ENCODE measurements at regions of chr4 and their contacts with region 1.

Region 1: DNA sequence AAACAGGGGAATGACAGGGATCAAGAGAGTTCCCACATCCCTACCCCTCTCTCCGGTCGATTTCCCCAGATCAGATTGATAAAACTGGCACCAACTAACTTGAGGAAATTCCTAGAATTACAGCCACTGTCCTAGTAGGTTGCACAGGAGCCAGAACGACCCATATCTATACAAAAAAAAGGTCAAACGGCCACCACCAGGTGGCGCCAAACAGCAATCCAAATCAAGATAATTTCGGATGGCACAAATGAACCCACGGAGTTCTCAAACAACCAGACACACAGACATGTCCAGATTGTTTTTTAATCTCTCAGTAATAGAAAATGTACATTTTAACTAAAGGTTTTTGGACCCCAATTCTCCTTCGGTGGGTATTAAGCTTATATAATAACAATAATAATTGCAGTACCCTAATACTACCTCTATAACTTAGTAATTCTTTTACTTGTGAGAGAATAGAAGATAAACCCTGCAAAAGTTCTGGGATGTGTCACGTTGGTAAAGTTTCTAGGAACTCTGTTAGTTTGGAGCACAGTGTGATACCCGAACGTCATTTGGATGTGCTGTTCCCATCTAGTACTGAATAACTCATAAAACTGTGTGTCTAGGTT is 212.6 kb downstream of the SPOCK3 start:
- DNase-seq: peak; percentile 66
- H3K4me3 ChIP-seq: no peak overlapping the region
- H3K27ac ChIP-seq: no peak overlapping the region
- H3K4me1 ChIP-seq: no peaks in the 10 kb centered on the region
- H3K27me3 ChIP-seq: no peaks in the 10 kb centered on the region
- CTCF ChIP-seq: peak in 3 of 4 experiments; percentile 57 to 75 (median 58)
- EP300 ChIP-seq: no peak
- POLR2A ChIP-seq: no peak

Region 2: DNA sequence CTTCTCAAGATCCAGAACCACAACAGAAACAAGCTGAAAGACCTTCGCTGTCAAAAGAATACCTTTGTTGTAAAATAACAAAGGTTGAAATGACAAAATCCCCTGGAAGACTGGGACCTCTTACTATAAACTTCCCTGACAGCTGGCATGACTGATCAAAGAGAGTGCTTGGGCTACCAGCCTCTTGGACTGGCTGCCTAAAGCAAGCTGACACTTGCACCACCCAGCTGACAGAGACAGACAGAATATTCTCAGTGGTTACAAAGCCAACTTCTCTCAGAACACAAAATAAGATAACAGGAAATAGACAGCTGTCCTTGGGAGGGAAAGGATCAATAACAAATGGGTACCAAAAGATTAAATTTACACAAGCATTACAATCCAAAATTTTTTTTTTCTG is 454.3 kb after region 1 on chr4:
- intact Hi-C with region 1: no loop called
- DNase-seq: no peak
- H3K4me3 ChIP-seq: no peak overlapping the region
- H3K27ac ChIP-seq: no peak overlapping the region
- H3K4me1 ChIP-seq: no peaks in the 10 kb centered on the region
- H3K27me3 ChIP-seq: no peaks in the 10 kb centered on the region
- CTCF ChIP-seq: no peak
- EP300 ChIP-seq: no peak
- POLR2A ChIP-seq: no peak

Region 3: GRCh38 chr4:168076989-168077725 is 1055.5 kb after region 1 on chr4:
- intact Hi-C with region 1: loop called (anchors 2 kb)
- DNase-seq: no peak
- H3K4me3 ChIP-seq: no peak overlapping the region
- H3K27ac ChIP-seq: no peak overlapping the region
- H3K4me1 ChIP-seq: peaks cover 0 to 2% (median 0%) of the 10 kb centered on the region in 4 donors
- H3K27me3 ChIP-seq: no peaks in the 10 kb centered on the region
- CTCF ChIP-seq: peak in 3 of 4 experiments; percentile 51 to 77 (median 69)
- EP300 ChIP-seq: no peak
- POLR2A ChIP-seq: no peak